Calu3 (cell line): ENCODE measurements at regions of chr6 and their contacts with region 1.

Region 1: GRCh38 chr6:154928325-154928922 is 66.7 kb upstream of the TIAM2 start:
- DNase-seq: peak; percentile 69
- H3K4me3 Mint-ChIP-seq: no peak overlapping the region
- H3K27ac Mint-ChIP-seq: no peak overlapping the region
- H3K4me1 Mint-ChIP-seq: peaks cover 29% of the 10 kb centered on the region
- H3K27me3 Mint-ChIP-seq: no peaks in the 10 kb centered on the region
- CTCF ChIP-seq: peak; percentile 34

Region 2: GRCh38 chr6:154868143-154868594 is 60.3 kb before region 1 on chr6:
- CTCF ChIA-PET with region 1: interaction called, 5 read pairs
- intact Hi-C with region 1: loop called (anchors 1 kb)
- DNase-seq: peak; percentile 7
- H3K4me3 Mint-ChIP-seq: no peak overlapping the region
- H3K27ac Mint-ChIP-seq: no peak overlapping the region
- H3K4me1 Mint-ChIP-seq: peaks cover 9% of the 10 kb centered on the region
- H3K27me3 Mint-ChIP-seq: no peaks in the 10 kb centered on the region
- CTCF ChIP-seq: peak; percentile 23

Region 3: DNA sequence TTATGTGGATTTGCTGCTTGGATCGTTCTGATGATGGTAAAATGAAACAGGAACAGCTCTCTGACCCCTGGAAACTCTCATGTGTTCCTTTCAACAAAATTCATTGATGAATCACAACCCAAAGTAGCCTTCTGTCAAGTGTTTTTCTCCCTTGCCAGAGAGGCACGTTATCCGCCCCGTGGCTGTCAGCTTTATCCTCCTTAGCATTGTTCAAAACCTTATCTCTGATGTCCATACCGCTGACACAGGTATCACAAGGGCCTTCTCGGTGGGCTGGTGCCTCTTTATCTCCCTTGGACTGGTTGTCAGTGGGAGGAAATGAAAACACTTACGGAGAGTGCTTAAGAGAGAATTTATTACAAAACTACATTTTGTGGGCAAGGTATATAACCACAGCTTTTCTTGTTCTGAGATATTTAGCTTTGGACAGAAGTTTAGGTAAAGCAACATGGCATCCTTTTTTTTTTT is 151.6 kb after region 1 on chr6:
- CTCF ChIA-PET with region 1: no interaction called
- intact Hi-C with region 1: loop called (anchors 10 kb)
- DNase-seq: no peak
- H3K4me3 Mint-ChIP-seq: no peak overlapping the region
- H3K27ac Mint-ChIP-seq: no peak overlapping the region
- H3K4me1 Mint-ChIP-seq: peaks cover 17% of the 10 kb centered on the region
- H3K27me3 Mint-ChIP-seq: no peaks in the 10 kb centered on the region
- CTCF ChIP-seq: no peak

Region 4: DNA sequence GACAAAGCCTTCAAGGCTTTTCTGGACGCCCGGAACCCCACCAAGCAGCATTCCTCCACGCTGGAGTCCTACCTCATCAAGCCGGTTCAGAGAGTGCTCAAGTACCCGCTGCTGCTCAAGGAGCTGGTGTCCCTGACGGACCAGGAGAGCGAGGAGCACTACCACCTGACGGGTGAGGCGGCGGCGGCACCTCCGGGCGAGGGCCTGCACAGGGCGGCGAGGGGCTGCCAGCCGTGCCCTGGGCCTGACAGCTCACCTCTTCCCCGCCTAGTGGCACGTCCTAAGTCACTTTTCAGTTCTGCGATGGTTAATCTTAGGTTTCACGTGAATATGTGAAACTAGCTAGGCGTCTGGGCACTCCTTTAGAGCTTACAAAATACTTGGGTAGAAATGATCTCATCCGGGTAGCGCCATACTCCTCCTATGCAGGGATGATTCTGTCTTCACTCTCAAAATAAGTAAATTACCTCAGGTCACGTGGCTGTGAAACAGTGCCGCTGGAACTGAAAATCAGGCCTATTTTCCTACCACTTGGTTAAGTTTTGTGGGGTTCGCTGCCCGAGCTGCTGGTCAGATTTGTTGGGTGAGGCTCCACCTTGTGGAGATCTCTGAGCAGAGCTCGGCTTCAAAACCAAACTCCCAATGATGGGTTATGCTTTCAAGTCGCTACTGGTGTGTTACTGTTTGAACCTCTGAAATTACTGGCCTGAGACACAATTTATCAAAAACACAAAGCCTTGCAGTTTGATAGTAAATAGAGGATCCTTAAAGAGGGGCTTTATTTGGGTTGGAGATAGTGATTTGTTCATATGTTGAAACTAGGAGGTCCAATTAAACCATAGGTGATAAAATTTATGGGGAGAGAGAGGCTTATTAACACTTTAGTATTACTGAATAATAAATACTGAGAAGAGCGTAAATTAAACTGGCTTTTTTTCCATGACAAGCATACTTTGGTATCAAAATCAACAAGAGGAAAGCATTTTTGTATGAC is 319.9 kb after region 1 on chr6:
- CTCF ChIA-PET with region 1: no interaction called
- intact Hi-C with region 1: loop called (anchors 2 kb)
- DNase-seq: peak; percentile 16
- H3K4me3 Mint-ChIP-seq: no peak overlapping the region
- H3K27ac Mint-ChIP-seq: no peak overlapping the region
- H3K4me1 Mint-ChIP-seq: no peaks in the 10 kb centered on the region
- H3K27me3 Mint-ChIP-seq: no peaks in the 10 kb centered on the region
- CTCF ChIP-seq: peak; percentile 34